Caco-2 (cell line): ENCODE measurements at regions of chr1 and their contacts with region 1.

Region 1: GRCh38 chr1:155063550-155064110 is at the start of gene EFNA4:
- DNase-seq: peak; percentile 91
- H3K4me3 ChIP-seq: peak within 1 kb of the TSS; percentile 64
- H3K4me3 Mint-ChIP-seq: peak within 1 kb of the TSS; percentile 86
- H3K27ac Mint-ChIP-seq: peak within 1 kb of the TSS; percentile 22
- H3K4me1 ChIP-seq: 0 out of 2 replicates have a peak, but pooled peaks cover 19% of the 10 kb centered on the region
- H3K4me1 Mint-ChIP-seq: peaks cover 22% of the 10 kb centered on the region
- H3K27me3 ChIP-seq: no peaks in the 10 kb centered on the region
- H3K27me3 Mint-ChIP-seq: no peaks in the 10 kb centered on the region
- CTCF ChIP-seq: no peak
- total RNA-seq, gene EFNA4: 13.8 and 16.0 TPM in 2 replicates

Region 2: GRCh38 chr1:154870115-154870571 is 193.5 kb before region 1 on chr1 and contains the start of gene KCNN3:
- CTCF ChIA-PET with region 1: no interaction called
- POLR2A ChIA-PET with region 1: no interaction called
- intact Hi-C with region 1: no loop called
- DNase-seq: peak; percentile 92 to 94
- H3K4me3 ChIP-seq: no peak within 1 kb of the TSS; the same call in 1 of the 2 replicates
- H3K4me3 Mint-ChIP-seq: peak within 1 kb of the TSS; percentile 41
- H3K27ac Mint-ChIP-seq: no peak within 1 kb of the TSS
- H3K4me1 ChIP-seq: no peaks in the 10 kb centered on the region
- H3K4me1 Mint-ChIP-seq: peaks cover 7% of the 10 kb centered on the region
- H3K27me3 ChIP-seq: peaks cover 2% of the 10 kb centered on the region; the same call in 1 of the 2 replicates
- H3K27me3 Mint-ChIP-seq: peaks cover 19% of the 10 kb centered on the region
- CTCF ChIP-seq: no peak
- total RNA-seq, gene KCNN3: 0.05 TPM in 1 of 2 replicates, not detected in the other

Region 3: DNA sequence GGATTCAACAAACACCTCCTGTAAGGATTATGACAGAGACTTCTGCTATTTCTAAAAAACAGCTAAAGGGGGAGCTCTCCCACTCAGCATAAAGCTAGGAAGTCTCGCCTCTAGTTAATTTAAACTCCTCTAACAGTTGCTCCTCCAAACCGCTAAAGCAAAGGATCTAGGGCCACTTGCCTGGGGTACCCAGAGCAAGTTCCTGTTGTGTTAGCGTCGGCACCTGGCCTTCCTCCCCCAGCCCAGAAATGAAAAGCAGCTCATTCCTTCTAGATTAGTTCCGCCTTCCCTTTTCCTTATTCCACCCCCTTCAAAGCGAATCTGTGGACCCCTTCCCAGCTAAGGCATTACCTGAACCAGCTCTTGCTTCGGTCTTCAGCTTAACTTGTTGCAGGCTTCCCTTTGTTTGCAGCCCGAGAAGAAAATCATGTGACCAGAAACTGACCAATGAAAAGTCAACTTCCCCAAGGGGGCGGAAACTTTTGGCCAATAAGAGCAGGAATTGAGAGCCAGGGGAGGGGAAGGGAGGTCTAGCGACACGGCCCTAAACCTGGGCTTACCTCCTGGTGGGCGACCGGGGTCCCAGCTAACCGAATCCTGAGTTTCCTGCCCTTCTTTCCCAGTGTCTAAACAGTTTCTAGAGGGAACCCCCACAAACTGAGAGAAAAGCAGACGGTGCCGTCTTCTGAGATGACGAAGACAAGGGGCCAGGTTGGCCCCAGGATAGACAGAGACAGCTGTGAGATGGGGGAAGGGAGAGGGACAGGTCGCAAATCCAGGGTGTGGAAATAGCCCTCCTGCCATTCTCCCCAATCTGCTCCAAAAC is 107.7 kb before region 1 on chr1 and contains the start of gene PBXIP1:
- CTCF ChIA-PET with region 1: interaction called, 9 read pairs
- POLR2A ChIA-PET with region 1: no interaction called
- intact Hi-C with region 1: loop called (anchors 5 kb)
- DNase-seq: peak; percentile 87 to 92
- H3K4me3 ChIP-seq: peak within 1 kb of the TSS; percentile 43
- H3K4me3 Mint-ChIP-seq: peak within 1 kb of the TSS; percentile 80
- H3K27ac Mint-ChIP-seq: peak within 1 kb of the TSS; percentile 79
- H3K4me1 ChIP-seq: peaks cover 15% of the 10 kb centered on the region
- H3K4me1 Mint-ChIP-seq: peaks cover 16% of the 10 kb centered on the region
- H3K27me3 ChIP-seq: no peaks in the 10 kb centered on the region
- H3K27me3 Mint-ChIP-seq: no peaks in the 10 kb centered on the region
- CTCF ChIP-seq: peak in 1 of 2 experiments; percentile 29
- total RNA-seq, gene PBXIP1: 24.0 and 24.6 TPM in 2 replicates

Region 4: DNA sequence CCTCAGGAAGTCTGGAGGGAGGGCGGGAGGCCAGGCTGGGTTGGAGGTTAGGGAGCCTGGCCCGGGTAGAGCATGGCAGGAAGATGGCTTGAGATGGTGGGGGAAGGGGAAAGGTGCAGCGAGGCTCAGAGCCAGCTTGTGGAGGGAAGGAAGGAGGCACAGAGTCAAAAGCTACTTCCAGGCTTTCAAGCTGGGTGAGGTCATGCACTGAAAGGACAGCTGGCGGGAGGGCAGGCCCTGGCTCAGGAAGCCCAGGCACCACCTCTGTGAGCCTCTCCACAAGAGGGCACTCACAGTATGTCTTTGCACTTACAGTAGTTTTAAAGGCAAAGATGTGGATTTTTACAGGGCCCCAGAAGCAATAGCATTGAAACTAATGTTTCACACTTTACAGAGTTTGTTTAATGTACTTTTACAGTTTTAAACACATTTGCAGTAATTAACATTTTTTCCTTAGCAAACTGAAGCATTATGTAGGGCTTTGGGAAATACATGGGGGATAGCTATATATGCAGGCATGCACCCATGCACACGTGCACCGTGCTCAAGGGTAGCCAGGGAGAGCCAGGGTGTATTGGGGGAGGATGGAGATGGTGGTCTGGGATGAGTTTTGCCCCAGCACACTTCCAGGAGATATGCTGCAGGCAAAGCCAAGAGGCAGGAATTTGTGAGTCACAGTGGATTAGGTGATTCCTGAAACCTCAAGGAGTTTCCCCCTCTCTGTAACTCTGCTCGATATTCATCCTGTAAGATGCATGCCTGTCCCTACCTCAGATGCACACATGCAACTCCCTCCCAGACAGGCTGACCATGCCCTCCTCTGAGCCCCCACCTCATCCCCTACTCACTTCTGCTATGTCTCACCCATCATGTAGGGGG is 18.6 kb before region 1 on chr1:
- CTCF ChIA-PET with region 1: interaction called, 24 read pairs
- POLR2A ChIA-PET with region 1: no interaction called
- intact Hi-C with region 1: loop called (anchors 1 kb)
- DNase-seq: peak; percentile 79 to 81
- H3K4me3 ChIP-seq: no peak overlapping the region
- H3K4me3 Mint-ChIP-seq: no peak overlapping the region
- H3K27ac Mint-ChIP-seq: no peak overlapping the region
- H3K4me1 ChIP-seq: peaks cover 18% of the 10 kb centered on the region
- H3K4me1 Mint-ChIP-seq: peaks cover 15% of the 10 kb centered on the region
- H3K27me3 ChIP-seq: no peaks in the 10 kb centered on the region
- H3K27me3 Mint-ChIP-seq: no peaks in the 10 kb centered on the region
- CTCF ChIP-seq: peak; percentile 73 to 84

Region 5: GRCh38 chr1:155050560-155051341 is 12.9 kb before region 1 on chr1 and contains the start of gene ADAM15:
- CTCF ChIA-PET with region 1: interaction called, 24 read pairs
- POLR2A ChIA-PET with region 1: interaction called, 4 read pairs
- intact Hi-C with region 1: loop called (anchors 1 kb)
- DNase-seq: peak; percentile 80 to 90
- H3K4me3 ChIP-seq: peak within 1 kb of the TSS; percentile 61
- H3K4me3 Mint-ChIP-seq: peak within 1 kb of the TSS; percentile 88
- H3K27ac Mint-ChIP-seq: peak within 1 kb of the TSS; percentile 86
- H3K4me1 ChIP-seq: peaks cover 20% of the 10 kb centered on the region
- H3K4me1 Mint-ChIP-seq: peaks cover 19% of the 10 kb centered on the region
- H3K27me3 ChIP-seq: no peaks in the 10 kb centered on the region
- H3K27me3 Mint-ChIP-seq: no peaks in the 10 kb centered on the region
- CTCF ChIP-seq: peak; percentile 86 to 90
- total RNA-seq, gene ADAM15: 44.0 and 48.2 TPM in 2 replicates